H1 (cell line): ENCODE measurements at regions of chr7 and their contacts with region 1.

Region 1: GRCh38 chr7:35424869-35425495 is 171.1 kb upstream of the TBX20 start:
- DNase-seq: peak in 1 of 2 experiments; percentile 65
- H3K4me3 ChIP-seq: no peak overlapping the region
- H3K27ac ChIP-seq: no peak overlapping the region
- H3K4me1 ChIP-seq: no peaks in the 10 kb centered on the region
- H3K27me3 ChIP-seq: no peaks in the 10 kb centered on the region
- CTCF ChIP-seq: peak; percentile 67 to 97 (median 78)
- EP300 ChIP-seq: no peak
- POLR2A ChIP-seq: no peak
- RAD21 ChIP-seq: peak; percentile 77 to 83

Region 2: DNA sequence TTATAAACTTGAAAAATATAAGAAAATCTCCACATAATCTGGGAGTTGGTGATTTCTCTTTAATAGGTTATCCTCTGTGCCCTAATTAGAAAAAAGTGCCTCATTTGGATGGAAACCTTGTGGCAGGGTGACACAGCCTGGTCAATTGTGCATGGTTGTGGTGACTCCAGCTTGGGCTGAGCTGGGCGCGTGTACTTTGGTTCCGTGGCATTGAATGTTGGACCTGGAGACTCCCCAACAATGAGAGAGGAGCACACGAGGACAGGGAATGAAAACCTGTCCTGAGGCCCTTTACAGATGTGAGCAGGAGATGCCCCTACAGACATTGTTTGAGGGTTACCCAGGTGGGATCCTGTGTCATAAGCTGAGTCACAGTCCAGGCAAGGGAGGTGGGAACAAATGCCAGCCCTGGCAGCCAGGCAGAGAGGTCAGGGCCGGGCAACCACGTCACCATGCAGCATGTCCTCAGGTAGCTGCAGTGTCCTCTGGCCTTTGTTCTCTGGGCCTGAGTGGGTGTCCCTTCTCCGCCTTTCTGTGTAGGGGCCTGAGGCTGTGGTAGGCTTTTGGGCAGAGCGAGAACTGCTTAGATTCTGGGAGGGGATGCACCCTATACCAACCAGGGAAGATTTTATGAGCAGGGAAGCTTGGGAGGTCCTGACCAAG is 23.6 kb before region 1 on chr7:
- CTCF ChIA-PET with region 1: interaction called, 11 read pairs
- POLR2A ChIA-PET with region 1: no interaction called
- DNase-seq: no peak
- H3K4me3 ChIP-seq: no peak overlapping the region
- H3K27ac ChIP-seq: no peak overlapping the region
- H3K4me1 ChIP-seq: no peaks in the 10 kb centered on the region
- H3K27me3 ChIP-seq: no peaks in the 10 kb centered on the region
- CTCF ChIP-seq: no peak
- EP300 ChIP-seq: no peak
- POLR2A ChIP-seq: no peak
- RAD21 ChIP-seq: no peak

Region 3: GRCh38 chr7:35437619-35438275 is 12.8 kb after region 1 on chr7:
- CTCF ChIA-PET with region 1: interaction called, 11 read pairs
- POLR2A ChIA-PET with region 1: no interaction called
- DNase-seq: no peak
- H3K4me3 ChIP-seq: no peak overlapping the region
- H3K27ac ChIP-seq: no peak overlapping the region
- H3K4me1 ChIP-seq: no peaks in the 10 kb centered on the region
- H3K27me3 ChIP-seq: no peaks in the 10 kb centered on the region
- CTCF ChIP-seq: no peak
- EP300 ChIP-seq: no peak
- POLR2A ChIP-seq: no peak
- RAD21 ChIP-seq: no peak

Region 4: DNA sequence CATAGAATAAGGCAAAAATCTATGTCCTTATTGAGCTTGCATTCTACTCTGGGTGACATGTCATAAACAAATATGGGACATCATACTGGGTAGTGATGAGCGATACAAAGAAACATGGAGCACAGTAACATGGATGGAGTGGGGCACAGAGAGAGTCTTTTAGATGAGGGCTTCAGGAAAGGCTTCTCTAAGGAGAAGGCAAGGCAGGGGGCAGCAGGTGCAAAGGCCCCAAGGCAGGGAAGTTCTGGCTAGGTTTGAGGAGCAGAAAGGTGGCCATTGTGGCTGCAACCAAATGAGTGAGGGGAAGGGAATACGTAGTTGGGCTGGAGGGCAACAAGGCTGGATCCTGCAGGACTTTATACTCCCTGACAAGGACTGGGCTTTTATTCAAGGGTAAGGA is 58.6 kb after region 1 on chr7:
- CTCF ChIA-PET with region 1: no interaction called
- POLR2A ChIA-PET with region 1: no interaction called
- DNase-seq: no peak
- H3K4me3 ChIP-seq: no peak overlapping the region
- H3K27ac ChIP-seq: no peak overlapping the region
- H3K4me1 ChIP-seq: 0 out of 7 replicates have a peak, but pooled peaks cover 0 to 2% (median 0%) of the 10 kb centered on the region in 4 experiments
- H3K27me3 ChIP-seq: no peaks in the 10 kb centered on the region
- CTCF ChIP-seq: no peak
- EP300 ChIP-seq: no peak
- POLR2A ChIP-seq: no peak
- RAD21 ChIP-seq: no peak

Region 5: DNA sequence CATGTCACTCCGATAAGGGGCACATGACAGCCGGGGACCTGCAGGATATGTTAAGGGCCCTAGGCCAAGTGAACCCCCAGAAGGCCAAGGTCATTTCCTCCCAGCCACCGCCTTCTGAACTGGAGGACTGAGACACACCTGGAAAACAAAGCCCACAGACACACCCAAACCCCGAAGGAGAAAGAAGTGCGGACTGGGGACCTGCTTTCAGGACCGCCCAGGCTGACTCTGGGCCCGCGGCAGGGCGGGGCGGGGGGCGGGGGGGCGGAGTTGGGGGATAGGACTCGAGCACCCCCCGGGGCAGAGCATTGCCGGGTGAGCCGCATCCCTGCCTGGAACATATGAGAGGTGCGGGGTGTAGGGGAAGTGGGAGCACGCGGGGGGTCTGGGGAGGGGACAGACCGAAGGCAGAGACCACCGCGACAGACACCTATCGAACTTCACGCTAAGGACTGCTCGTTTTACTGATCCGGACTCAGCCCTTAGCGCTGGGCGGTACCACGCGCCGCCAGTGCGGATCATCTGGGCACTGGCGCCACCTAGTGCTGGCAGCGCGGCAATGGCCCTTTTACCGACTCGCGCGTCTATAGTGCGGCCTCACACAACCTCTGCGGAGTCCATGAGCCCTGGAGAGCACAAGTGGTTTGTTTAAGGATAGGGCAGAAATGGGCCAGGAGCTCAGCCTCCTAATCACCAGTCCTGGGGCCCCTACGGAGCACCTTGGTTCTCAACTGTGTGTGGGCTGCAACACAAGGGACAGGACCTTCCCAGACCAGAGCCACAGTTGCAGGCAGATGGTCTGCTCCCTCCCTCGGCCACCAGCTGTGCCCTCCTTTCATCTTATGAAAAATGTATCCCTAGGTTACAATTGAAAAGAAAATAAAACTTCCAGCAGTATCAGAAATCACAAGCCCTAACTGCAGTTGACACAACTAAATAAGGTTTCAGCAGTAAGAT is 112.4 kb after region 1 on chr7:
- CTCF ChIA-PET with region 1: interaction called, 11 read pairs
- POLR2A ChIA-PET with region 1: no interaction called
- DNase-seq: peak; percentile 54 to 92
- H3K4me3 ChIP-seq: peak overlapping the region in 3 of 4 experiments; percentile 34 to 57 (median 42); a peak in 4 of 8 replicates
- H3K27ac ChIP-seq: no peak overlapping the region
- H3K4me1 ChIP-seq: no peaks in the 10 kb centered on the region
- H3K27me3 ChIP-seq: peaks cover 0 to 14% (median 8%) of the 10 kb centered on the region in 4 experiments; a peak in 4 of 7 replicates
- CTCF ChIP-seq: peak; percentile 90 to 98 (median 93)
- EP300 ChIP-seq: no peak
- POLR2A ChIP-seq: no peak
- RAD21 ChIP-seq: peak; percentile 94 to 95

Region 6: GRCh38 chr7:35891004-35891830 is 466.2 kb after region 1 on chr7:
- CTCF ChIA-PET with region 1: no interaction called
- POLR2A ChIA-PET with region 1: no interaction called
- DNase-seq: no peak
- H3K4me3 ChIP-seq: no peak overlapping the region
- H3K27ac ChIP-seq: no peak overlapping the region
- H3K4me1 ChIP-seq: no peaks in the 10 kb centered on the region
- H3K27me3 ChIP-seq: no peaks in the 10 kb centered on the region
- CTCF ChIP-seq: no peak
- EP300 ChIP-seq: no peak
- POLR2A ChIP-seq: no peak
- RAD21 ChIP-seq: no peak